ENCODE measurements at regions of chr2 and their contacts with region 1.

Region 1: GRCh38 chr2:152025678-152026287 is 73.1 kb downstream of the CACNB4 start:
- DNase-seq: peak; percentile 92
- ATAC-seq: peak; percentile 97
- H3K4me3 Mint-ChIP-seq: peak overlapping the region; percentile 71
- H3K27ac Mint-ChIP-seq: peak overlapping the region; percentile 62
- H3K4me1 Mint-ChIP-seq: peaks cover 5% of the 10 kb centered on the region
- H3K27me3 Mint-ChIP-seq: peaks cover 10% of the 10 kb centered on the region
- CTCF ChIP-seq: peak; percentile 99

Region 2: GRCh38 chr2:151922845-151923666 is 102.7 kb before region 1 on chr2:
- CTCF ChIA-PET with region 1: no interaction called
- POLR2A ChIA-PET with region 1: no interaction called
- intact Hi-C with region 1: no loop called
- DNase-seq: no peak
- ATAC-seq: no peak
- H3K4me3 Mint-ChIP-seq: no peak overlapping the region
- H3K27ac Mint-ChIP-seq: no peak overlapping the region
- H3K4me1 Mint-ChIP-seq: no peaks in the 10 kb centered on the region
- H3K27me3 Mint-ChIP-seq: peaks cover 17% of the 10 kb centered on the region
- CTCF ChIP-seq: no peak

Region 3: DNA sequence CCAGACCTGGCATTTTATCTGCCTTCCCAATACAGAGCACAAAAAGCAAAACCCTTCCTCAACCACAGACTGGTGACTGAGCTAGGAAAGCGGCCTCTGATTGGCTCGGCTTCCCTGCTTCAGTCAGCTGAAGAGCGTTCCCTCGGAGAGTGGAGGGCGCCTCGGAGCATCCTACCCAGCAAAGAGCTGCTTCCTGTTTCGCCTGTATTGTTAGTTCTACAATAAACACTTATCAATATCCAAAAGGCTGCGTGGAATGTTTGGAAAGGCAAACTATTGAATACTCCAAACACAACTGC is 51.9 kb before region 1 on chr2:
- CTCF ChIA-PET with region 1: interaction called, 10 read pairs
- POLR2A ChIA-PET with region 1: no interaction called
- intact Hi-C with region 1: no loop called
- DNase-seq: no peak
- ATAC-seq: no peak
- H3K4me3 Mint-ChIP-seq: no peak overlapping the region
- H3K27ac Mint-ChIP-seq: no peak overlapping the region
- H3K4me1 Mint-ChIP-seq: peaks cover 10% of the 10 kb centered on the region
- H3K27me3 Mint-ChIP-seq: peaks cover 2% of the 10 kb centered on the region
- CTCF ChIP-seq: no peak

Region 4: GRCh38 chr2:151999053-151999452 is 26.7 kb before region 1 on chr2:
- CTCF ChIA-PET with region 1: interaction called, 27 read pairs
- POLR2A ChIA-PET with region 1: interaction called, 4 read pairs
- intact Hi-C with region 1: no loop called
- DNase-seq: peak; percentile 59
- ATAC-seq: peak; percentile 87
- H3K4me3 Mint-ChIP-seq: no peak overlapping the region
- H3K27ac Mint-ChIP-seq: no peak overlapping the region
- H3K4me1 Mint-ChIP-seq: no peaks in the 10 kb centered on the region
- H3K27me3 Mint-ChIP-seq: no peaks in the 10 kb centered on the region
- CTCF ChIP-seq: peak; percentile 88

Region 5: DNA sequence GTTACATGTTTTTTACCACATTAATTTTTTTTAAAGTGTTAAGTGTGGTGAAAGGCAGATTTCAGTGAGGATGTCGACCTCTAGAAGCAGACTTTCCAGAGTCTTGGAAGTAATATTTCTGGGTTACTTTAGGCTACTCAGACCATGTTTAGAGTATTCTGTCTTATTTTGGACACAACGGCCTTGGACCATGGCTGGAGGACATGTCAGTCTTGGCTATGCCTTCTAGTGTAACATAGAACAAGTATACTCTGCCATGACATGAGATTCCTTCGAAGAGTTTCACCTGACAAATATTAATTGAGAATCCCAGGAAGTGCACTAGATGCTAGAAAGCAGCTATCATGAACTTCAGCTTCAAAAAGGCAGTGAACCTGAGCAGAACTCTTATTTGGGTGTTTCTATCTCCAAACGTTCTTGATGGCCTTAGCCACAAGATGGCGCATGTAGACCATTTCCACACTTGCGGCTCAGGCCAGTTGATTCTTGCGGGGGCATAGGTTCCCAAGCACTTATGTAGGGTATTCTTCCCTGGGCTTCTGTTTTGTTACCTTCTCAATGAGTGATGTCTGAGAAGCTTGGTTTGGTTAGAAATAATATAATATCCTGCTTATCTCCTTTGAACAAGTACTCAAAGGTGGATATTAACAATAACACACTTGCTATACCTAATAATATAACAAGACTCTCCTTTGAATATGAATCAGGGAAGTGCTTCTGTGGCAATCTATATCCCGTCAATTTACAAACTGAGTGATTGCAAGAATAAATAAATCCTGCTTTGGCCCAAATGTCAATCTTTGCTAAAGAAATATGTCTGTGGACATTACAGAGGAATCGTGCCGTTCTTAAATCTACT is 11.1 kb after region 1 on chr2:
- CTCF ChIA-PET with region 1: interaction called, 18 read pairs
- POLR2A ChIA-PET with region 1: no interaction called
- intact Hi-C with region 1: no loop called
- DNase-seq: peak; percentile 77
- ATAC-seq: peak; percentile 72
- H3K4me3 Mint-ChIP-seq: no peak overlapping the region
- H3K27ac Mint-ChIP-seq: no peak overlapping the region
- H3K4me1 Mint-ChIP-seq: no peaks in the 10 kb centered on the region
- H3K27me3 Mint-ChIP-seq: peaks cover 2% of the 10 kb centered on the region
- CTCF ChIP-seq: peak; percentile 68

Region 6: DNA sequence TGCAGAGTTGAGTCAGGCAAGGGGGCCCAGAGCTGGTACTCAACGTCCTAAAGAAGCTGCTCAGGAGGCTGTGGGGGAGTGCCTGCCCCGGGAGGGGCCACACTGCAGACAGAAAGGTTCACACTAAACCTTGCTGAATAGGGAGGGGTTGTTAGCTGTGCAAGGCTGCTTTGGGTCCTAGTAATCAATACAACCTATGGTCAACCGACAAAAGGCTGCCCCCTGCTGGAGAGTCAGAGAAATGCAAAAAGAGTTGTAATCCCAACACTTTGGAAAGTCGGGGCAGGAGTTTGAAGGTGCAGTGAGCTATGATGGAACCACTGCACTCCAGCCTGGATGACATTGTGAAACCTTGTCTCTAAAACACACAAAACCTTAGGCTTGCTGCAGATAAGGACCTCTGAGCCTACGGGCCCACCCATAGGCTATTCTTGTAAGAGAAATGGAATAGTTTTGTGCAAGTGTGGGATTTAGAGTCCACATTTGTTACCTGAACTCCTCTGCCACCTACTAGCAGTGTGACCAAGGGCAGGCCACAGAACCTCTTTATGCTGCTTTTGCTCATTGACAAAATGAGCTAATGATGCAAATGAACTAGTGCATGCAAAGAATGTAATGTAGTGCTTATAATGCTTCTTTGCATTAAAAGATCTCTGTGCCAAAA is 610.0 kb after region 1 on chr2:
- CTCF ChIA-PET with region 1: interaction called, 10 read pairs
- POLR2A ChIA-PET with region 1: no interaction called
- intact Hi-C with region 1: no loop called
- DNase-seq: peak; percentile 75
- ATAC-seq: peak; percentile 75
- H3K4me3 Mint-ChIP-seq: no peak overlapping the region
- H3K27ac Mint-ChIP-seq: no peak overlapping the region
- H3K4me1 Mint-ChIP-seq: no peaks in the 10 kb centered on the region
- H3K27me3 Mint-ChIP-seq: no peaks in the 10 kb centered on the region
- CTCF ChIP-seq: peak; percentile 86

Measured in activated CD8-positive, alpha-beta T cell treated with anti-CD3 and anti-CD28 coated beads for 36 hours (primary cell).